Pancreas (tissue), 10 donors: ENCODE measurements at regions of chr10 and their contacts with region 1.

Region 1: GRCh38 chr10:79542626-79543025 is 17.6 kb downstream of the SFTPA2 start:
- DNase-seq: no peak
- ATAC-seq: peak in 3 of 4 donors; percentile 20 to 40 (median 37)
- H3K4me3 ChIP-seq: no peak overlapping the region
- H3K27ac ChIP-seq: no peak overlapping the region
- H3K4me1 ChIP-seq: no peaks in the 10 kb centered on the region
- H3K27me3 ChIP-seq: no peaks in the 10 kb centered on the region
- CTCF ChIP-seq: no peak

Region 2: GRCh38 chr10:79608505-79609375 is 66.1 kb after region 1 on chr10:
- intact Hi-C with region 1: loop called in 1 of 3 experiments (anchors 10 kb)
- DNase-seq: peak in 5 of 6 donors; percentile 21 to 73 (median 46)
- ATAC-seq: peak in 3 of 4 donors; percentile 74 to 93 (median 83)
- H3K4me3 ChIP-seq: no peak overlapping the region
- H3K27ac ChIP-seq: no peak overlapping the region
- H3K4me1 ChIP-seq: no peaks in the 10 kb centered on the region
- H3K27me3 ChIP-seq: no peaks in the 10 kb centered on the region
- CTCF ChIP-seq: peak; percentile 42 to 73 (median 46)